ENCODE measurements at regions of chr1 and their contacts with region 1.

Region 1: GRCh38 chr1:225777583-225778336 is at the start of gene SRP9:
- DNase-seq: peak; percentile 99
- ATAC-seq: peak; percentile 100
- total RNA-seq, gene SRP9: 211 TPM

Region 2: DNA sequence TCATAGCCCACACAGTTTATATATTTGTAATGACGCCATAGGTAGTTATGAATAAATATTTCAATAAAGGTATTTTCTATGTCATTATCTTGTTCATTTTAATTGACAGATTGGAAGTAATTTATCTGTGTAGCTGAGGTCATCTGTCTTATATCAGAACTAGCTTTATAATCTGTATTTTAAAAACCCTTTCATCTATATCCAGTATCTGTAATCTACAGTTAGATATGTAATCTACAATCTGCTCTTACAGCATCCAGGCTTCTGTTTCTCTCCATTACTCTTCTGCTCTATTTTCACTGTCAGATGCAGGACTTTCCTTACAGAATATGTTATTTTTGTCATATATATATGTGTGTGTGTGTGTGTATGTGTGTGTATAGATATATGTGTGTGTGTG is 487.5 kb before region 1 on chr1:
- intact Hi-C with region 1: no loop called
- DNase-seq: no peak
- ATAC-seq: no peak

Region 3: DNA sequence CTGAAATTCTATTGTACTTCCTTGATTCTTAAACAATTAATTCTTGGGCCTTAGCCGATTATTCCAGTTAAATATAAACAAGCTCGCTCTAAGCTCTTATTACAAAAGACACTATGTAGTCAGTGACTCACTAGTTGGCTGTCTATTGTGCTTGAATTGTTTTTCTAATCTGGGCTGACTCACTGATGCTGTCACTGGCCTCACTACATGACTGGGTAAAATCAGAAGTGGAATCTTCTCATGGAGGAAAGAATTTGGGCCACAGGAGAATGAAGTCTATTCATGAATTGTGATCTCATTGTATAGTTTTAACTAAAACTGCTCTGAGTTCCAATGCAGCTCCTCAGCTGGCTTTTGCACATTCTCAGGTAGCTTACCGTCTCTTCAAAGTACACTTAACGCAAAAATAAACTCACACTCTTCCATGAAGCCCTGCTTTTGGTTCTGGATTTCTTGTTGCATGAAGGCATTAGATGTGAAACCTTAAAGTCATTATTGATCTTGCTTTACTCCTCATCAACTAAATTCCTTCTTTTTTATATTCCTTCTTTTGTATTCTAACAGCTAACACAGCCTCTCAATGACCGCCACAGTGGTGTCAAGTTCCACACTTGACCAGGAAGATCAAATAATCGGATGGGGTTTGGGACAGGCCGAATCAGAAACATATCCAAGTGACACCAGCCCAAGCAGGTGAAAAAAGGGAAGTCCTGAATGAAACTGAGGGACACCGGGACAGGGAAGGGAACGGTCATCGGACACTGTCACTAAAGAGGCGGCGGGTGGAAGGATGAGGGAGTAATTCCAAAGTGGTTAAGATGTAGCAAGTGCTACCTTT is 269.0 kb before region 1 on chr1:
- intact Hi-C with region 1: loop called (anchors 10 kb)
- DNase-seq: no peak
- ATAC-seq: peak; percentile 98

Region 4: DNA sequence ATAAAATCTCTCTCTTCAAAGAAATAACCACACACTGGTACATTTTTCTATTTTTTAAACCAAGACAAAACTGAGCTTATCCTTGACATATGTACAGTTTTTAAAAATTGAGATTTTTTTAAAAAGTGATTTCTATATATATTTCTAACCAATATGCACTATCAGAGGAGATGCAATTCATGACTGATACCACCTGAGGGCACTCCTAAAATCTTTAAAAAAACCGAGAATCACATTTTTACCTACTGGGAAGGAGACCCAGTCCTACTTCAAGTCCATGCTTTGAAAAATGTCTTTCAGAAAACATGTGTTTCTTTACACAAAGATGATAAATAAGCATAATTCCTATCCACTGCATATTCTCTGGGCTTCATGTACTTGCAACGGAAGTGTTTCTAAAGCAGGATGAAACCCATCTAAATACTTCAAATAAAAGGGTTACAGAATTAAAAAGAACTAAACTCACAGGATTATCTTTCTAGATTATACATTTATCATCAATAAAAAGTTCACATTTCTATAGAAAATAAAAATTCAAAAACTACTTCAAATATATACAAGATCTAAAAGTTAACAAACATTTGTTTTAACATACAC is 223.4 kb before region 1 on chr1:
- intact Hi-C with region 1: loop called (anchors 10 kb)
- DNase-seq: no peak
- ATAC-seq: peak; percentile 34

Measured in left ventricle myocardium superior (tissue), 1 donor.